MCF 10A (cell line): ENCODE measurements at regions of chr12 and their contacts with region 1.

Region 1: GRCh38 chr12:31406345-31406744 is 80.4 kb upstream of the SINHCAF start:
- DNase-seq: no peak
- H3K4me3 Mint-ChIP-seq: no peak overlapping the region
- H3K27ac Mint-ChIP-seq: no peak overlapping the region
- H3K4me1 Mint-ChIP-seq: no peaks in the 10 kb centered on the region
- H3K27me3 Mint-ChIP-seq: no peaks in the 10 kb centered on the region
- CTCF ChIP-seq: no peak

Region 2: DNA sequence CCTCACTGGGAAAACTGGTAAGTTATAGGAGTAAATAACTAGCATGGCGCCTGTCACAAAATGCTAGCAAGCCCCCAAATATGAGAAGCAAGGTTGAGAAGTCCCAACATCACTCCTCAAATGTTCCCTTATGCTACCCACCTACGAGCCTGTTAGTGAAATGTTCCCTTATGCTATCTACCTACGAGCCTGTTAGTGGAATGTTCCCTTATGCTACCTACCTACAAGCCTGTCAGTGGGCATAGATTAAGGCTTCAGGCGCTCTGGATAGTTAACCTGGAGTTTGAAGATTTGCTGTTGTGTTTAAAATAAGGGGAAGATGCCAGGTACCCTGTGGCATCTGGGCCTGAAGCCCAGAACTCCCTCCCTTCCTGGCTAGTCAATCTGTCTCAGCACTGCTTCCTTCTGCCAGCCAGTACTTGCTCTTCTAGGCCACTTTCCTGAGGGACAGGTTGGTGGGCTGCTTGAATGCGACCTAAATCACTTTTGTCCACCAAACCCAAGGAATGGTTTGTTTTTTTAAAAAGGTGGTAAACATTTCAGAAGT is 13.3 kb before region 1 on chr12:
- CTCF ChIA-PET with region 1: interaction called, 13 read pairs
- POLR2A ChIA-PET with region 1: no interaction called
- intact Hi-C with region 1: no loop called
- DNase-seq: no peak
- H3K4me3 Mint-ChIP-seq: no peak overlapping the region
- H3K27ac Mint-ChIP-seq: no peak overlapping the region
- H3K4me1 Mint-ChIP-seq: no peaks in the 10 kb centered on the region
- H3K27me3 Mint-ChIP-seq: no peaks in the 10 kb centered on the region
- CTCF ChIP-seq: no peak

Region 3: DNA sequence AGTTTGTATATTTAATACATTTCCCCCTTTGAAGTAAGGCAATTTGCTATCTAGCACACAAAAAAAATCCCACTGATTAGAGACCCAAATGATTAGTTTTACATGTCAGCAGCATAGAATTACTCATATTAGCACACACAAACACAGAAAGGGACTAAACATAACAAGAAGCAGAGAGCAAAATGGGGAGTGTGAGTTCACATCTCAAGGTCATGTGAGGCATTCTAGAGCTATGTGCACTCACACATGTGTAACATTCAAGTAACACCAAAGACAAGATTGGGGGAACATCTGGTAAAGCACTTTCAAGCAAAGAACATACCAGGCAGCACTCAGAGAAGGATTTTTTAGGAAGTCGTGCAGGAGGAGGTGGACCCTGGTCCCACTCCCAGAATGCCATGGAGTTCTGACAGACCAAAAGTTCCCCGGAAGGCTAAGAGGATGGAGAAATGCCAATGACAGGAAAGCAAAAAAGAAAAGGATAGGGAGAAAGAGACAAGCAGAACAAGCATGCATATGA is 25.4 kb after region 1 on chr12:
- CTCF ChIA-PET with region 1: interaction called, 8 read pairs
- POLR2A ChIA-PET with region 1: no interaction called
- intact Hi-C with region 1: loop called (anchors 1 kb)
- DNase-seq: no peak
- H3K4me3 Mint-ChIP-seq: no peak overlapping the region
- H3K27ac Mint-ChIP-seq: no peak overlapping the region
- H3K4me1 Mint-ChIP-seq: peaks cover 6% of the 10 kb centered on the region
- H3K27me3 Mint-ChIP-seq: no peaks in the 10 kb centered on the region
- CTCF ChIP-seq: no peak

Region 4: DNA sequence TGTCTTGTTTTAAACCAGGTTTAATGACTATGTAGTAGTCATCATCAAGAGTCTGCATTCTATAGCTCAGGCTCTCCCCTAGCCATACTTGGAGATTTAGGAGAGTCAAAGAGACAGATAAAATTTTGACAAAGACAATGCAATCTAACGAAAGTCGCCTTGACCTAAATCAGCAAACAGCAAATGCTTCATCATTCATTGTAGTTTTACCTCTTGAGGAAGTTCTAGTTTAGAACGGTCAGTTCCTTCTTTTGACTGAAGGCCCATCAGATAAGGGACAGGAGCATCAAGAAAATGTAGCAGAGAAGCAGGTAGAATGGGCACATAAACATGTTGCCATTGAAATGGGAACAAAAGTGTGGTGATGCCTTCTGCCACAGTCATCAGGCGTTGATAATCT is 53.6 kb after region 1 on chr12:
- CTCF ChIA-PET with region 1: no interaction called
- POLR2A ChIA-PET with region 1: no interaction called
- intact Hi-C with region 1: no loop called
- DNase-seq: no peak
- H3K4me3 Mint-ChIP-seq: no peak overlapping the region
- H3K27ac Mint-ChIP-seq: no peak overlapping the region
- H3K4me1 Mint-ChIP-seq: no peaks in the 10 kb centered on the region
- H3K27me3 Mint-ChIP-seq: no peaks in the 10 kb centered on the region
- CTCF ChIP-seq: no peak

Region 5: DNA sequence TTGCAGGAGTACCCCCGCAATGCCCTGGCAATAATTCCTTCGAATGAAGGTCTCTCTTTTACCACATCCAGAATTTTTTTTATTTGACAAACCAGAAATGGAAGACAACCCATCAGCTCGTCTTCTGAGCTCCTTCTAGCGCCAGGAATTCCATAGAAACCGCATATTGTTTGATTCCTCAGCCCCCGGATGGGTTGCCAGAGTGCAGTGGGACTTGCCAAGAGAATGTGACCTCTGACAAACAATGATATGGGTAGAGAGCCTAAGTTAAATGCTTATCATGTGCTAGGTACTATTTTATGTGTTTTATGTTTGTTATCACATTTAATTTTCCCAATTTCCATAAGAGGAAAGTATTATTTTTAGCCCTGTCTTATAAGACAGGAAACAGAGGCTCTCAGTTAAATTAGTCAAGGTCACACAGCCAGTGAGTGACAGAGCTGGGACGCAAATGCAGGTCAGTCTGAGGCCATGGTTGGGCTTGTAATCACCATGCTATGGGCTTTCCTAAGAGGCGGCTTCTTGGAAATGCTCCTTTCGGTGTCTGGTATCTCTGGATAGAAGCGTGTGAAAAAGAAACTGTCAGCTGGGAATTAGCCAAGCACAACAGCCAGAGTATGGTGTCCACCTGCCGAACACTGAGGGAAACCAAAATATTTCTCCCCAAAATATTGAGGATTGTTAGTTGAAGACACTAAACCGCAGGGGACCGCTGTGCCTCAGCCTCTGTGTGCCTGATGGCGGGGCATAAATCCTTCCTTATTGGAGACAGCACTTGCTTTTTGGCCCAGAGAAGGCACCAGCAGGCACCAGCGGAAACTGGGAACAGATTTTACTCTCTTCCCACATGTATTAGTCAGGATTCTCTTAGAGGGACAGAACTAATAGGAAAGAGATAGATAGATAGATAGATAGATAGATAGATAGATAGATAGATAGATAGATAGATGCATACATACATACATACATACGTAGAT is 223.7 kb after region 1 on chr12:
- CTCF ChIA-PET with region 1: interaction called, 43 read pairs
- POLR2A ChIA-PET with region 1: interaction called, 4 read pairs
- intact Hi-C with region 1: no loop called
- DNase-seq: no peak
- H3K4me3 Mint-ChIP-seq: no peak overlapping the region
- H3K27ac Mint-ChIP-seq: no peak overlapping the region
- H3K4me1 Mint-ChIP-seq: no peaks in the 10 kb centered on the region
- H3K27me3 Mint-ChIP-seq: no peaks in the 10 kb centered on the region
- CTCF ChIP-seq: no peak

Region 6: GRCh38 chr12:31641509-31642090 is 235.3 kb after region 1 on chr12:
- CTCF ChIA-PET with region 1: interaction called, 43 read pairs
- POLR2A ChIA-PET with region 1: no interaction called
- intact Hi-C with region 1: loop called (anchors 1 kb)
- DNase-seq: no peak
- H3K4me3 Mint-ChIP-seq: no peak overlapping the region
- H3K27ac Mint-ChIP-seq: no peak overlapping the region
- H3K4me1 Mint-ChIP-seq: peaks cover 8% of the 10 kb centered on the region
- H3K27me3 Mint-ChIP-seq: no peaks in the 10 kb centered on the region
- CTCF ChIP-seq: no peak

Region 7: GRCh38 chr12:31647086-31647491 is 240.7 kb after region 1 on chr12:
- CTCF ChIA-PET with region 1: interaction called, 19 read pairs
- POLR2A ChIA-PET with region 1: no interaction called
- intact Hi-C with region 1: no loop called
- DNase-seq: peak; percentile 49
- H3K4me3 Mint-ChIP-seq: no peak overlapping the region
- H3K27ac Mint-ChIP-seq: peak overlapping the region; percentile 28
- H3K4me1 Mint-ChIP-seq: peaks cover 10% of the 10 kb centered on the region
- H3K27me3 Mint-ChIP-seq: no peaks in the 10 kb centered on the region
- CTCF ChIP-seq: no peak

Region 8: DNA sequence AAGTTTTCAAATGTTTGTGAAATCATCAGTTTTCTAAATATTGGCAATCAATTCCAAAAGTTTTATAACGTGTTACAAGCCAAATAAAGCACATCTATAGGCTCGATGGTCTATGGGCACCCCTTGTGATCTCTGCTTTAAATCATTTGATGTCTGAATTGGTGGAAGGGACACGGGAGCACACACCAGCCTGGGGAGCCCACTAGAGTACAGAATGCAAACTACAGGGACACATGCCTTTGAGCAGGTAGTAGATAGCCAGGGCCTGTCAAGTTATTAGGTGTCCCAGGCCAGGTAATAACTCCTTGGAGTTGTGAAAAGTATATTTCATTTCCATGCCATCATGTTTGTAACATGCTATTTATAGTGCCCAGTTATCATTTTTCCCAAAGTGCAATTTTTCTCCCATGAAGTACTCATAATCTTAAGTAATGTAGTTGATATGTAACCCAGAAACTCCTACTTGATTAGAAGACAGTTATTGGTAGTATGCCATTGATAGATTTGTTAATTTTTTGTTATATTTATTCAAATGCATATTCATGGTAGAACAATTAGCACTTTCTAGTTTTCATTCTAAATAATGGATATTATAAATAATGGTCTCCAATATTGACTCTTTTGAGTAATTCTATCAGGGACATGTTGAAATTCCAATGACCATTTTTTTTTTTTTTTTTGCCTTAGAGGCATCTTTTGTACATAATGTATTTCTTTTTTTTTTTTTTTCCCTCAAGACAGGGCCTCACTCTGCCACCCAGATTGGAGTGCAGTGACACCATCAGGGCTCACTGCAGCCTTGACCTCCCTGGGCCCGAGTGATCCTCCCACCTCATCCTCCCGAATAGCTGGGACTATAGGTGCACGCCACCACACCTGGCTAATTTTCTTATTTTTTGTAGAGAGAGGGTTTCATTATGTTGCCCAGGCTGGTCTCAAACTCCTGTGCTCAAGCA is 896.2 kb after region 1 on chr12:
- CTCF ChIA-PET with region 1: no interaction called
- POLR2A ChIA-PET with region 1: no interaction called
- intact Hi-C with region 1: loop called (anchors 5 kb)
- DNase-seq: peak; percentile 29
- H3K4me3 Mint-ChIP-seq: no peak overlapping the region
- H3K27ac Mint-ChIP-seq: no peak overlapping the region
- H3K4me1 Mint-ChIP-seq: no peaks in the 10 kb centered on the region
- H3K27me3 Mint-ChIP-seq: no peaks in the 10 kb centered on the region
- CTCF ChIP-seq: peak; percentile 28